ENCODE measurements at regions of chr6 and their contacts with region 1.

Region 1: DNA sequence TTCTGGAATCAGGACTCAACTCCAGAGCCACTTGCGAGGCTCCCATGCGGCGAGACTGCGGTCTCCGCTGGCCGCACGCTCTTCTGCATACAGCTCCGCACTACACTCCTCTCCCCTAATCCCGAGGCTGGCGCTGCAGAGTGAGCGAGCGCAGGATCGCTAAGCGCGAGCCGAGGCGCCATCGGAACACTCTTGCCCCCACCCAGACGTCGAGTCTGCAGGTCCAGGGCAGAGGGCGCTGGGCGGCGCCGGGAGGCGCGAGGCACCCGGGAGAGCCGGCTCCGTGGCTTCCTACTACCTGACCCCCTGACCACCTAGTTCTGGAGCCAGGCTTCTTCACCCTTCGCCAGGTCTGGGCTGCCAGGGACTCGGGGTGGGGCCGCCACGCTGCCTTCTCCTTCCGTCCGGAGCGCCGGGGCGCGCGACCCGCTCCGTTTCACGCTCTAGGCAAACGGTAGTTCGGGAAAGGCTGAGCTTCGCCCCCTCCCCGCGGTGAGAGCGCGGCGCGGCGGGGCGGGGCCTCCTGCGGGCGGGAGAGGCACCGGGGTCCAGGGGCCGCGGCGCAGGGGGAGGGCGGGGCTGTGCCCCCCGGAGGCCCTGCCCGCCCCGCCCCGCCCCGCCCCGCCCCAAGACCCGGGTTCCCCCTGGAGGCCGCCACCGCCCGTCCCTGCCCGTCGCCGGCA is 5.4 kb upstream of the TUBB2A start:
- DNase-seq: peak; percentile 51
- H3K4me3 ChIP-seq: peak overlapping the region; percentile 63 to 67
- H3K27ac ChIP-seq: peak overlapping the region; percentile 86 to 93
- H3K4me1 ChIP-seq: no peaks in the 10 kb centered on the region
- H3K27me3 ChIP-seq: no peaks in the 10 kb centered on the region
- CTCF ChIP-seq: peak in 2 of 4 experiments; percentile 21
- POLR2A ChIP-seq: peak; percentile 30

Region 2: GRCh38 chr6:1923449-1923848 is 1239.3 kb before region 1 on chr6:
- intact Hi-C with region 1: no loop called
- DNase-seq: no peak
- H3K4me3 ChIP-seq: no peak overlapping the region
- H3K27ac ChIP-seq: no peak overlapping the region
- H3K4me1 ChIP-seq: no peaks in the 10 kb centered on the region
- H3K27me3 ChIP-seq: no peaks in the 10 kb centered on the region
- CTCF ChIP-seq: no peak
- POLR2A ChIP-seq: no peak

Region 3: DNA sequence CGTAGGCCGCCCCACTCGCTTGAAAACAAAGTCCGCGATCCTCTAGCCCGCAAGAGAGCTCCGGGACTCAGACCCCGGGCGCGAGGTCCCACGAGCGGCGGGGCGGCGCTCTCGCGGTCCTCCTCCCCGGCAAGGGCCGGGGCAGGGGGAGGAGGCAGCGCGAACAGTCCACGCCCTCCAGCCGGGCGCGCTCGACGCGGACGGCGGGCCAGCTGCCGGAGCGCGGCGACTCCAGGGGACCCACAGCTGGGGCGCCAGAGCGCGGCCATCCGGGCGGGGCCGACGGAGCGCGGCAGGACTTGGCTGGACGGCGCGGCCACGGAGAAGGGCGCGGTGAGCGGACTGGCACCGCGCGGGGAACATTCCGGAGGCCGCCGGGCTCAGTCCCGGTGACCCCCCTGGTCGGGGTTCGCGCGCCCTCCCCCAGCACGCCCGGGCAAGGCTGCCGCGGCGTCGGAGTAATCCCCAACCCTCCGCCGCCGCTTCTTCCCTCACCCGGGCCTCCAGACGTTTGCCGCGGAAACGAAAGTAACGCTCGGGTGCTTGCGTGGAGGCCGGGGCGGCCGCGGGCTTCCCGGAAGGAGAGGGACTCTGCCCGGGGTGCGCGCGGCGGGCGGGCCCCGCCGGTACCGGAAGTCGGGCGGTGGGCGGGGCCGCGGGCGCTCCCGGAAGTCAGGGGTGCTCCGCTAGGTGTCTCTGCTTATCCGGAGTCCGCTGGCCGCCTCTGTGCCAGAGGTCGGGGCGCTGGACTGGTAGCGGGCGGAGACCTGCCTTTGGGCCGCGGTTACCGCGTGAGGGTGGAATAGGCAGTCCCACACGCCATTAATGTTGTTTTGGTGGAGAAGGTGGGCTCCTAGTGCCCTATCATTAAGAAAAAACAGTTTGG is 94.1 kb before region 1 on chr6 and contains the start of gene RIPK1:
- intact Hi-C with region 1: no loop called
- DNase-seq: peak; percentile 92
- H3K4me3 ChIP-seq: peak within 1 kb of the TSS; percentile 86 to 94
- H3K27ac ChIP-seq: peak within 1 kb of the TSS; percentile 98 to 99
- H3K4me1 ChIP-seq: no peaks in the 10 kb centered on the region
- H3K27me3 ChIP-seq: no peaks in the 10 kb centered on the region
- CTCF ChIP-seq: peak in 3 of 4 experiments; percentile 41 to 75 (median 55)
- POLR2A ChIP-seq: peak; percentile 84
- total RNA-seq, gene RIPK1: 21.3 to 23.0 TPM

Region 4: GRCh38 chr6:3124667-3125066 is 38.0 kb before region 1 on chr6:
- intact Hi-C with region 1: loop called (anchors 5 kb)
- DNase-seq: no peak
- H3K4me3 ChIP-seq: no peak overlapping the region
- H3K27ac ChIP-seq: no peak overlapping the region
- H3K4me1 ChIP-seq: no peaks in the 10 kb centered on the region
- H3K27me3 ChIP-seq: no peaks in the 10 kb centered on the region
- CTCF ChIP-seq: no peak
- POLR2A ChIP-seq: no peak

Region 5: GRCh38 chr6:3251462-3252314 is 89.0 kb after region 1 on chr6:
- intact Hi-C with region 1: loop called (anchors 5 kb)
- DNase-seq: peak; percentile 80
- H3K4me3 ChIP-seq: no peak overlapping the region
- H3K27ac ChIP-seq: no peak overlapping the region
- H3K4me1 ChIP-seq: peaks cover 2% of the 10 kb centered on the region
- H3K27me3 ChIP-seq: no peaks in the 10 kb centered on the region
- CTCF ChIP-seq: peak; percentile 85 to 96 (median 95)
- POLR2A ChIP-seq: no peak

Measured in prostate gland (tissue), 2 donors.